ENCODE measurements at regions of chrX and their contacts with region 1.

Region 1: DNA sequence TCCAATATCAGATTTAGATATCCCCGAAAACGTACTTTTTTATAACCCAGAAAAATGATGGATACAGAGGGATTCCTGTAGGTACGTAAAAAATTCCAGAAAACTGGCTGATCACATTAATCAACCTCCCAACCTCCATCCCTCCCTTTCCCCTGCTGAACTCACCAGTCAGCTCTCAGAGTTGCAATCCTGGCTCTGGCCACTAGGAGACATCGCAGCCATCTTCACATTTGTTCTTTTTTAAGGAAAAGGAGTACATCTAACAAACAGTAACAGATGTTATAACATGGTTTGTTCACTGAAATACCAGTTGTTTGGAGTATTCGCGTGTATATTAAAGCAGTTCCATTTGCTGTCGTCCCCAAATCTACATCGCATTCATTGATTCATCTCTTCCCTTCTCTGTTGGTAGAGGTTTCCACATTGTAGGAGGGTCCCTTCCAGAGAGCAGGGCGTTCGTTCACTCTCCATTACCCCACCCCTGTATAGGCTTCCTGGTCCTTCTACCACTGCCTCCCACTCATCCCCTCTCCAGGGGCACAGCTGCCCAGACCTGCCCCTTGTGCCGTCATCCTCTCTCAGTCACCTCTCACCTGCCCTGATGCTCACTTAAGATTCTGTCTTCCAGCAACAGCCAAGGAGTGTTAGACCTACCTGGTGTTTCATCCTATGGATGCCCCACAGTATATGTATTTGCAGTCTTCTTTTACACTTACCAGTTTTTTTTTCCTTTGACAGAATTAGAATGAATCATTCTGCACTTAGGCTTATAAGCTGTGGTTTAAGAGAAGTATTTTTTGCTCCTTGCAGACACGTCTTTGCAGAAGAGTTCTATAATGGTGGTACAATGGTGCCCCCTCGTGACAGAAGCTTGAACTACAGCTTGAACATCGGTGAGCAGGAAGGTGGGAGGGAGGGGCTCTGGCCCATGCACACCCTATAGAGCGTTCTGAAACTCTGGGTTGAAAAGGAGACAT is 36.8 kb upstream of the RAB40AL start:
- DNase-seq: peak; percentile 72
- H3K4me3 Mint-ChIP-seq: no peak overlapping the region
- H3K27ac Mint-ChIP-seq: no peak overlapping the region
- H3K4me1 Mint-ChIP-seq: no peaks in the 10 kb centered on the region
- H3K27me3 Mint-ChIP-seq: peaks cover 68% of the 10 kb centered on the region
- CTCF ChIP-seq: peak; percentile 70

Region 2: GRCh38 chrX:102067966-102068708 is 832.1 kb before region 1 on chrX:
- CTCF ChIA-PET with region 1: no interaction called
- POLR2A ChIA-PET with region 1: no interaction called
- intact Hi-C with region 1: loop called (anchors 2 kb)
- DNase-seq: peak; percentile 38
- H3K4me3 Mint-ChIP-seq: no peak overlapping the region
- H3K27ac Mint-ChIP-seq: no peak overlapping the region
- H3K4me1 Mint-ChIP-seq: peaks cover 7% of the 10 kb centered on the region
- H3K27me3 Mint-ChIP-seq: peaks cover 37% of the 10 kb centered on the region
- CTCF ChIP-seq: peak; percentile 74

Region 3: DNA sequence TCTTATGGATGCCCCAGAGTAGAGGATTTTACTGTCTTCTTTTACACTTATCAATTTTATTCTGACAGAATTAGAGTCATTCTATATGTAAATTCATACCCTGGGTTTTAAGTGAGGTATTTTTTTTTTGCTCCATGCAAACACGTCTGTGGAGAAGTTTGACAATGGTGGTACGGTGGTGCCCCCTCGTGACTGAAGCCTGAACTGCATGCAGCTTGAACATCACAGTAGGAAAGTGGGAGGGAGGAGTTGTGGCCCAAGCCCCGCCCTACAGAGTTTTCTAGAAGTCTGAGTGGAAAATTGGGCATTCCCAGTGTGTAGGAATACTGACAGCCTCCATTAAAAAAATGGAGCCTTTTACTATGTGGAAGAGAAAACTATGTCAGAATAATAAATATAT is 36.5 kb before region 1 on chrX:
- CTCF ChIA-PET with region 1: interaction called, 5 read pairs
- POLR2A ChIA-PET with region 1: no interaction called
- intact Hi-C with region 1: loop called (anchors 5 kb)
- DNase-seq: peak; percentile 86
- H3K4me3 Mint-ChIP-seq: no peak overlapping the region
- H3K27ac Mint-ChIP-seq: no peak overlapping the region
- H3K4me1 Mint-ChIP-seq: no peaks in the 10 kb centered on the region
- H3K27me3 Mint-ChIP-seq: peaks cover 25% of the 10 kb centered on the region
- CTCF ChIP-seq: peak; percentile 90

Region 4: DNA sequence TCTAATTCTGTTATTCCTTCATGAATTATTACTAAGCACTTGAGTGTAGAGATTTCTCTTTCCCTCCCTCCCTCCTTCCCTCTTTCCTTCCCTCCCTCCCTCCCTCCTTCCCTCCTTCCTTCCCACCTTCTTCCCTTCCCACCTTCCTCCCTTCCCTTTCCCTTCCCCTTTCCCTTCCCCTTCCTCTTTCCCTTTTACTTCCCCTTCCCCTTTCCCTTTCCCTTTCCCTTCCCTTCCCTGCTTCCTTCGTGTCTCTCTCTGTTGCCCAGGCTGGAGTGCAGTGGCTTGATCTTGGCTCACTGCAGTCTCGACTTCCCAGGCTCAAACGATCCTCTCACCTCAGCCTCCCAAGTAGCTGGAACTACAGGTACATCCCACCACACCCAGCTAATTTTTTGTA is 12.5 kb before region 1 on chrX:
- CTCF ChIA-PET with region 1: interaction called, 19 read pairs
- POLR2A ChIA-PET with region 1: no interaction called
- intact Hi-C with region 1: no loop called
- DNase-seq: no peak
- H3K4me3 Mint-ChIP-seq: no peak overlapping the region
- H3K27ac Mint-ChIP-seq: no peak overlapping the region
- H3K4me1 Mint-ChIP-seq: peaks cover 6% of the 10 kb centered on the region
- H3K27me3 Mint-ChIP-seq: peaks cover 69% of the 10 kb centered on the region
- CTCF ChIP-seq: no peak